ENCODE measurements at regions of chr2 and their contacts with region 1.

Region 1: GRCh38 chr2:218733171-218734021 is 22.8 kb downstream of the TTLL4 start:
- DNase-seq: peak; percentile 93
- ATAC-seq: no peak
- H3K4me3 ChIP-seq: no peak overlapping the region
- H3K27ac ChIP-seq: peak overlapping the region; percentile 99; the same call in 1 of the 2 replicates
- H3K4me1 ChIP-seq: peaks cover 20% of the 10 kb centered on the region
- H3K27me3 ChIP-seq: no peaks in the 10 kb centered on the region
- CTCF ChIP-seq: no peak
- POLR2A ChIP-seq: no peak
- RAD21 ChIP-seq: no peak

Region 2: DNA sequence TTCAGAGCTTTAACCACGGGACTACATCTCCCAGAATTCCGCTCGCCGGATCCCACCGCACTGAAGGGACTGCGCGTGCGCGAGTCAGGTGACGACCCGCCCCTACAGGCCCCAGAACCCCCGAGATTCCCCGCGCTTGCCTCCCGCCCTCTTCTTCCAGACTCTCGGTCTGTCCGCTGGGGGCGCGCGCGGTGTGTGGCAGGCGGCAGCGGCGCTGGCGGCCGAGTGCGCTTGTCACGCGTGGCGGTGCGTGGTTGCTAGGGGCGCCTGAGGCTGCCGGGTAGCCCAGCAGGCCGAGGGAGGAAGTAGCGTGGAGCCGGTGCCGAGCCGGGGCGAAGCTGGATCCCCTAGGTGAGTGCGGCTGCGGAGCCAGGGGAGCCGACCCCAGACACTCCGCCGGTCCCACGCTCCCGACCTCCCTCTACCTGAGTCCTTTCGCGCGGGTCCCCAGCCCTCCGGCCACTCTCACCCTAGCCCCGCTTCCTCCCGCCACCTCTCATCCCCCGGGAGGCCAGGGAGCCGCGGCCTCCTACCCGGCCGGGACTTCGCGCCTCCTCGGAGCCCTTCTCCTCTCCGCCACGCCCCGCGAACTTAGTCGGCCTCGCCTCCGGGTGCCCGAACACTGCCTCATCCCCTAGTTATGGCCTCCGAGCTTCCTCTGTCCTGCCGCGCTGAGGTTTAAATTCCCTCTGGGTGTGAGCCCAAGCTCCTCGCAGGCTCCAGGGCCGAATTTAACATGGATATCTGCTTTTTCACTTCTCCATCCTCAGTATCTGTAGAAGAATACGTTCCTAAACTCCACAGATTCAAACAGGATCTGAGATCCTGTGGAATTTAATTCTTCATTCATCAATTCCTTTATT is 22.5 kb before region 1 on chr2 and contains the start of gene TTLL4:
- CTCF ChIA-PET with region 1: interaction called, 4 read pairs
- POLR2A ChIA-PET with region 1: no interaction called
- dilution Hi-C with region 1: no loop called
- in situ Hi-C with region 1: no loop called
- intact Hi-C with region 1: loop called (anchors 2 kb)
- DNase-seq: peak; percentile 93
- ATAC-seq: peak; percentile 98
- H3K4me3 ChIP-seq: peak within 1 kb of the TSS; percentile 69
- H3K27ac ChIP-seq: peak within 1 kb of the TSS; percentile 74
- H3K4me1 ChIP-seq: peaks cover 3% of the 10 kb centered on the region
- H3K27me3 ChIP-seq: no peaks in the 10 kb centered on the region
- CTCF ChIP-seq: peak; percentile 92
- POLR2A ChIP-seq: peak; percentile 56
- RAD21 ChIP-seq: peak; percentile 74
- total RNA-seq, gene TTLL4: 8.3 and 9.0 TPM in 2 replicates

Region 3: GRCh38 chr2:218806346-218806978 is 73.1 kb after region 1 on chr2:
- CTCF ChIA-PET with region 1: no interaction called
- POLR2A ChIA-PET with region 1: interaction called, 3 read pairs
- dilution Hi-C with region 1: no loop called
- in situ Hi-C with region 1: no loop called
- intact Hi-C with region 1: loop called (anchors 5 kb)
- DNase-seq: peak; percentile 96
- ATAC-seq: peak; percentile 93
- H3K4me3 ChIP-seq: no peak overlapping the region
- H3K27ac ChIP-seq: peak overlapping the region; percentile 10; the same call in 1 of the 2 replicates
- H3K4me1 ChIP-seq: peaks cover 3% of the 10 kb centered on the region
- H3K27me3 ChIP-seq: no peaks in the 10 kb centered on the region
- CTCF ChIP-seq: no peak
- POLR2A ChIP-seq: no peak
- RAD21 ChIP-seq: no peak

Measured in IMR-90 (cell line).